ENCODE measurements at regions of chr7 and their contacts with region 1.

Region 1: DNA sequence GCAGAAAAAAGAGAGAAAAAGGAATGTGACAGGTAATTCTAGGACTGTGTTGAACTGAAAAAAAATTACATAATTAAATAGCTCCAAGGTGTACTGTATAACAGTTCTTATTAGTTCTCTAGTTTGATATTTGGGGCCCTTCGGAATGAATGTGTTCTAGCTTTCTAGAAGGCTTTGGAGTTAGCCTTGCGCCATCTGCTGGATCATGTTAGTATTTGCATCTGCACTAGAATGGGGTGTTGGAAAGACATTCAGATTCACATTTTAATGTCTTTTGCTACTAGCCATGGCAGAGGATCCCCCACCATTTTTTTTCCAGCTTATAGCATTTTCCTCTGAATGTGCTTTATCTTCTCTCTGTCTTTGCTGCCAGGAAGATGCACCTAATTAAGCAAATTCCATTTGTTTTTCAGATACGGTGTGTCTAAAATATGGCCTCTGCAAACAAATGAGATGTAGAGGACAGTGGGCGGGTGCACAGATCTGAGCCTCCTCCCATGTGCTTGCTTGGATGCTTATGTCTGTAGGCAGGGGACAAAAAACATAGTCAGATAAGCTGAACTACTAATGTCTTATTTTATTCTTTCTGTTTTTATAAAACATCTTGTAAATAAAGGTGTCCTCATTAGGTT is 238.5 kb downstream of the PHF14 start:
- DNase-seq: peak; percentile 69
- H3K4me3 Mint-ChIP-seq: no peak overlapping the region
- H3K27ac Mint-ChIP-seq: no peak overlapping the region
- H3K4me1 Mint-ChIP-seq: peaks cover 2% of the 10 kb centered on the region
- H3K27me3 Mint-ChIP-seq: peaks cover 3% of the 10 kb centered on the region

Region 2: DNA sequence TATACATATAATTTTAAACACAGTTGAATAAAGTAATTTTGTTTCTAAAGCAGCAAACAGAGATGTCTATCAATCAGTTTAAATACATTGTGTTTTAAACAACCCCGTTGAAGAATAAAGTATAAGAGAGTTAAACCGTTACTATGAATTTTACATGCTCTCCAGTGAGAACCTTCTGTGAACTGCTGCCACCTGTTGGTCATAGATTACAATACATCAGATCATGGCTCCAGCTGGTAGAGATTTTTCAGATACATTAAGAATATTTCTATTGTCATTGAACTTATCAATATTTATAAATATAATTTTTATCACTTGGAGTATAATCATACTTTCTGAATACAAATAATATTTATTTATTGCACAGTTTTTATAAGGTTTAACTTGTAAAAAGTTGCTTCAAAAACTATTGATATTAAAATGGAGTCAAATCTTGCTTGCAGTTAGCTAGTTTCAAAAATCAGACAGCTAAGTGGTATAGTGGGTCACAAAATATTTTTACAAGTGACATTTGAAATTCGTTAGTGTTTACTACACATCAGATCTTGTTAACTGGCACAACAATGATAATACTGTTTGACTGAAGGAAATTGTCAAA is 799.7 kb before region 1 on chr7:
- CTCF ChIA-PET with region 1: no interaction called
- intact Hi-C with region 1: loop called (anchors 5 kb)
- DNase-seq: peak; percentile 29
- H3K4me3 Mint-ChIP-seq: no peak overlapping the region
- H3K27ac Mint-ChIP-seq: no peak overlapping the region
- H3K4me1 Mint-ChIP-seq: no peaks in the 10 kb centered on the region
- H3K27me3 Mint-ChIP-seq: no peaks in the 10 kb centered on the region

Region 3: DNA sequence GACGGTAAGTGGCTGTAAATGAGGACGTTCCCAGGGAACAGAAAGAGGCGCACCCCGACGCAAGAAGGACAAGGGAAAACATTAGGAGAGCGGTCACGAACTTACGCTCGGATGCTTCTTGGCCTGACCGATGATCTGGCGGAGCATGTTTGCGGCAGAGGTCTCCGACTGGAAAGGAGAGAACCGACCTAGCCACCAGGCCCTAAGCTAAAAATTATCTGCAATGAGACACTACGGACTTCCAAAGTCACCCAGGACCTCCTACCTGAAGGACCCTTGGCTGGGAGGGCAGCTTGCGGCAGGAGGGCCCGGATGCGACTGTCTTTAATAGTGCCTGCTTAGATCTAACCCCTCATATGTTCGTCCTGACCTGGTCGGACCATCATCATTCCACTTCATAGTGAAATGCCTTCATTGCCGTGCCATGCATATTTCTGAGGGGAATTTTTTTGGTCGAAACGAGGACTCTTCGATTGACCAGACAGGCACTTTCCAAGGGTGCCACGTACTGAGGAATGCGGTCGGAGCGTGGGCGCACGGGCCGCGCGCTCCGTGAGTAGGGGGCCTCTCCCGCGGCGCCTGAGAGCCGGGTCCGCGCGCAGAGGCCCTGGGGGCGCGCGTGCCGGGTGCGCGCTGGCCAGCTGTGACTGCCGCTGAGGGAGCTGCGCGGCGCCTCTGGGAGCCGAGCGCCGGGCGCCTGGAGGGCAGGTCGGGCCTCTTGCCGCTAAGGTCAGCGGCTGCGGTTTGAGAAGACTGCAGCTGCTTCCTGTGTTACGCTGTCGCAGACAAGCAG is 272.1 kb before region 1 on chr7:
- CTCF ChIA-PET with region 1: interaction called, 7 read pairs
- intact Hi-C with region 1: loop called (anchors 1 kb)
- DNase-seq: peak; percentile 86
- H3K4me3 Mint-ChIP-seq: no peak overlapping the region
- H3K27ac Mint-ChIP-seq: no peak overlapping the region
- H3K4me1 Mint-ChIP-seq: peaks cover 32% of the 10 kb centered on the region
- H3K27me3 Mint-ChIP-seq: no peaks in the 10 kb centered on the region

Region 4: DNA sequence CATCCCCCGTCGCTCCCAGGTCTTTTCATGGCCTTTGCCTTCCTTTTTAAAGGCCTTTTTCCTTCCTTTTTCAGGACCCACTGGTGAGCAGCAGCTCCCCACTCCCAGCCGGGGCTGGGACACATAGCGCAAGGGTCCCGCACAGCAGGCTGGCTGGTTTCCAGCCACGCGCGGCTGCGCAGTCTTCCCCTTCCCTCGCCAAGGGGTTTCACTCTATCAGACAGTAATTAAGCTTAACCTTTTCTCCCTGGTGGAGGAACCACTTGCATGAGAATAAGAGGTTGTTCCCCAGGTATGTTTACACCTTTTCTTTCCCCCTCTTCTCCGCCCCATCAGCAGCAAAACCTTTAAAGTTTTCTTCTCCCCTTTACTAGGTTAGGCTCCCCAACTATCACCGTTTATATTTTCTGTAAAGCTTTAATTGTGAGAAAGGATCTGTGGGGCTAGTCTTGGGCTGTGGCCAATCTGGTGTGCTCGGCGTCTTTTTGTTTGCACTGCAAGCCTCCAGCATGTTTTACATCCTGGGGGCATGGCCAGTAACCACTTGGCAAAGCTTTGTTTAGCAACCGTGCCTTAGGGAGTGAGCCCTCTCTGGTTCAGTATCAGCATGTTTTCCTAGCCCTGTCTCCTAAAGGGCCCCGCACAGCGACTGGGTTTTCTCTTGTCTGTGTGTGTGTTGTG is 18.9 kb before region 1 on chr7:
- CTCF ChIA-PET with region 1: interaction called, 16 read pairs
- intact Hi-C with region 1: no loop called
- DNase-seq: no peak
- H3K4me3 Mint-ChIP-seq: no peak overlapping the region
- H3K27ac Mint-ChIP-seq: no peak overlapping the region
- H3K4me1 Mint-ChIP-seq: peaks cover 10% of the 10 kb centered on the region
- H3K27me3 Mint-ChIP-seq: no peaks in the 10 kb centered on the region

Region 5: DNA sequence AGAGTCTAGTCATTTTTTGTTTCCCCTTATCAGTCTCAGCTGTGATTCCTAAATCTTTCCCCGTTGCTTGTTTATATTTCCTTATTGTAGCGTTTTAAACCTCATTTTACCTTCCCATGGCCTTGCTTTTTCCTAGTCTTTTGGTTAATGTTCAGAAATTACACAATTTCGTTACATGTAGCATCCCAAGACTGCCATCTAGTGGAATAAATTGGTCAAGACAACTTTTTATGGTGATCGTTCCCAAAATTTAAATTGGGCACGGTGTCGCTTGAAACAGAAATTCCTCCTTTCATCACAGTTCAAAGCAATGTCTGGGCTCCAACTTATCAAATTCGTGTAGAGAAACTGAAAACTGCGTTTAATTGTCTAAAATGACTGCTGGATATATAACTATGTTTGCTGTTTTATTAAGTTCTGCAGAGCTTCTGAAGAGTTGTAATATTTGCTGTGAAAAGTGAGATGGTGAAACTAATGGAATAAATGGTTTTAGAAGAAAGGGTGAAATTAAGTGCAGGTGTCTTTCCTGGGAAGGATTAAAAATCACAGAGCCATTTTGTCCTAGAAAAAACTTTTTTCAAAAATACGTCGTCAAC is 131.7 kb after region 1 on chr7:
- CTCF ChIA-PET with region 1: interaction called, 5 read pairs
- intact Hi-C with region 1: loop called (anchors 1 kb)
- DNase-seq: no peak
- H3K4me3 Mint-ChIP-seq: no peak overlapping the region
- H3K27ac Mint-ChIP-seq: no peak overlapping the region
- H3K4me1 Mint-ChIP-seq: peaks cover 4% of the 10 kb centered on the region
- H3K27me3 Mint-ChIP-seq: peaks cover 10% of the 10 kb centered on the region